ENCODE measurements at regions of chr9 and their contacts with region 1.

Region 1: GRCh38 chr9:28762167-28762566 is 1188.9 kb upstream of the C9orf72 start:
- DNase-seq: no peak
- ATAC-seq: no peak
- H3K4me3 ChIP-seq: no peak overlapping the region
- H3K27ac ChIP-seq: no peak overlapping the region
- H3K4me1 ChIP-seq: no peaks in the 10 kb centered on the region
- H3K27me3 ChIP-seq: no peaks in the 10 kb centered on the region
- CTCF ChIP-seq: no peak

Region 2: GRCh38 chr9:28707616-28708015 is 54.6 kb before region 1 on chr9:
- intact Hi-C with region 1: loop called (anchors 5 to 10 kb)
- DNase-seq: no peak
- ATAC-seq: no peak
- H3K4me3 ChIP-seq: no peak overlapping the region
- H3K27ac ChIP-seq: no peak overlapping the region
- H3K4me1 ChIP-seq: no peaks in the 10 kb centered on the region
- H3K27me3 ChIP-seq: no peaks in the 10 kb centered on the region
- CTCF ChIP-seq: no peak

Region 3: DNA sequence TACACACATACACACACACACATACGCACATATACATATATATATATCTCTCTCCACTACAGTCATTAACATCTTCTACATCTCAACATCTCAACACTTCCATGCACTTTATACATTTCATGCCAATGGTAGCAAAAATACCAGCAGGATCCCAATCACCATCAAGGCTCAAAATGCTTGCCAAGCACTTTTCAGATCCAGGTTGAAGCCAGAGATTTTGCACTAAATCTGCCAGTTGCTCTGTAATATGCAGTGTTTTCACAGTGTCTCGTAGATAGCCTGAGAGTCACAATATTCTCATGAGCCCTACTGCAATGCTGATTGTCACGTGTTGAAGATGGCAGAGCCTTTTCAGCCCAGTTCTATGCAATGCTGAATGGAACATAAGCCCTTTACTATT is 48.0 kb before region 1 on chr9:
- intact Hi-C with region 1: loop called (anchors 5 to 10 kb)
- DNase-seq: no peak
- ATAC-seq: no peak
- H3K4me3 ChIP-seq: no peak overlapping the region
- H3K27ac ChIP-seq: no peak overlapping the region
- H3K4me1 ChIP-seq: no peaks in the 10 kb centered on the region
- H3K27me3 ChIP-seq: no peaks in the 10 kb centered on the region
- CTCF ChIP-seq: no peak